ENCODE measurements at regions of chr6 and their contacts with region 1.

Region 1: GRCh38 chr6:2952557-2953095 is 18.7 kb downstream of the SERPINB6 start:
- DNase-seq: peak; percentile 91
- ATAC-seq: peak; percentile 96
- H3K4me3 ChIP-seq: no peak overlapping the region
- H3K27ac ChIP-seq: peak overlapping the region; percentile 12; the same call in 1 of the 2 replicates
- H3K4me1 ChIP-seq: peaks cover 10 to 18% of the 10 kb centered on the region in 2 experiments
- H3K27me3 ChIP-seq: no peaks in the 10 kb centered on the region
- CTCF ChIP-seq: peak; percentile 99 to 100 (median 99)
- POLR2A ChIP-seq: no peak
- RAD21 ChIP-seq: peak; percentile 83

Region 2: DNA sequence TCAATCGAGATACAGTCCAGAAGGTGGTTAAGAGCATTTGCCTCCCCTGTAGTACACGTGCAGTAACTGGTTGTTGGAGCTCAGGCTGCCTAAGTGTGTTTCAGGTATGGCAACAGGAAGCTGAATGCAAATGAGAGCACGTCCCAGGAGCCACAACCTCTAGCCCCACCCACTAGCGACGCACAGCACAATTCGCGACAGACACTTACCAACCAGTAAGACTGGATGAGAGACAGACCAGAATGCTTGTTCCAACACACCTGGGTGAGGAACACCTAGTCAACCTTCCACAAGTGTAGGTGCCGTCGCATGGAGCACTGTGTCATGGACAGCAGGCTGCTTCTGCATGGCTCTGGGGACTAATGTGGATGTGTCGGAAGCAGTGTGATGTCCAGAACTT is 103.8 kb before region 1 on chr6:
- CTCF ChIA-PET with region 1: interaction called, 17 read pairs
- POLR2A ChIA-PET with region 1: no interaction called
- RAD21 ChIA-PET with region 1: interaction called, 3 to 4 read pairs
- intact Hi-C with region 1: no loop called
- DNase-seq: no peak
- ATAC-seq: peak; percentile 43
- H3K4me3 ChIP-seq: no peak overlapping the region
- H3K27ac ChIP-seq: no peak overlapping the region; the same call in 1 of the 2 replicates
- H3K4me1 ChIP-seq: peaks cover 26 to 76% of the 10 kb centered on the region in 2 experiments
- H3K27me3 ChIP-seq: no peaks in the 10 kb centered on the region
- CTCF ChIP-seq: no peak
- POLR2A ChIP-seq: no peak
- RAD21 ChIP-seq: no peak

Region 3: GRCh38 chr6:2940010-2940850 is 12.4 kb before region 1 on chr6:
- CTCF ChIA-PET with region 1: interaction called, 28 read pairs
- POLR2A ChIA-PET with region 1: no interaction called
- RAD21 ChIA-PET with region 1: no interaction called
- intact Hi-C with region 1: no loop called
- DNase-seq: no peak
- ATAC-seq: no peak
- H3K4me3 ChIP-seq: no peak overlapping the region
- H3K27ac ChIP-seq: no peak overlapping the region
- H3K4me1 ChIP-seq: peaks cover 0 to 7% of the 10 kb centered on the region in 2 experiments; a peak in 1 of 4 replicates
- H3K27me3 ChIP-seq: no peaks in the 10 kb centered on the region
- CTCF ChIP-seq: no peak
- POLR2A ChIP-seq: peak; percentile 18
- RAD21 ChIP-seq: no peak

Region 4: GRCh38 chr6:2971420-2972218 is 19.0 kb after region 1 on chr6 and contains the start of gene SERPINB6:
- CTCF ChIA-PET with region 1: interaction called, 14 read pairs
- POLR2A ChIA-PET with region 1: interaction called, 4 read pairs
- RAD21 ChIA-PET with region 1: no interaction called
- intact Hi-C with region 1: loop called (anchors 1 kb)
- DNase-seq: no peak
- ATAC-seq: peak; percentile 66
- H3K4me3 ChIP-seq: peak within 1 kb of the TSS; percentile 53 to 70
- H3K27ac ChIP-seq: peak within 1 kb of the TSS; percentile 92
- H3K4me1 ChIP-seq: peaks cover 14 to 34% of the 10 kb centered on the region in 2 experiments
- H3K27me3 ChIP-seq: no peaks in the 10 kb centered on the region
- CTCF ChIP-seq: no peak
- POLR2A ChIP-seq: no peak
- RAD21 ChIP-seq: no peak
- total RNA-seq, gene SERPINB6: 103 TPM

Region 5: GRCh38 chr6:2976571-2977085 is 24.0 kb after region 1 on chr6:
- CTCF ChIA-PET with region 1: interaction called, 14 read pairs
- POLR2A ChIA-PET with region 1: interaction called, 4 read pairs
- RAD21 ChIA-PET with region 1: no interaction called
- intact Hi-C with region 1: loop called (anchors 1 kb)
- DNase-seq: no peak
- ATAC-seq: peak; percentile 48
- H3K4me3 ChIP-seq: peak overlapping the region in 1 of 2 experiments; percentile 22; a peak in 2 of 4 replicates
- H3K27ac ChIP-seq: peak overlapping the region; percentile 37; the same call in 1 of the 2 replicates
- H3K4me1 ChIP-seq: peaks cover 33 to 67% of the 10 kb centered on the region in 2 experiments
- H3K27me3 ChIP-seq: no peaks in the 10 kb centered on the region
- CTCF ChIP-seq: no peak
- POLR2A ChIP-seq: no peak
- RAD21 ChIP-seq: no peak

Region 6: DNA sequence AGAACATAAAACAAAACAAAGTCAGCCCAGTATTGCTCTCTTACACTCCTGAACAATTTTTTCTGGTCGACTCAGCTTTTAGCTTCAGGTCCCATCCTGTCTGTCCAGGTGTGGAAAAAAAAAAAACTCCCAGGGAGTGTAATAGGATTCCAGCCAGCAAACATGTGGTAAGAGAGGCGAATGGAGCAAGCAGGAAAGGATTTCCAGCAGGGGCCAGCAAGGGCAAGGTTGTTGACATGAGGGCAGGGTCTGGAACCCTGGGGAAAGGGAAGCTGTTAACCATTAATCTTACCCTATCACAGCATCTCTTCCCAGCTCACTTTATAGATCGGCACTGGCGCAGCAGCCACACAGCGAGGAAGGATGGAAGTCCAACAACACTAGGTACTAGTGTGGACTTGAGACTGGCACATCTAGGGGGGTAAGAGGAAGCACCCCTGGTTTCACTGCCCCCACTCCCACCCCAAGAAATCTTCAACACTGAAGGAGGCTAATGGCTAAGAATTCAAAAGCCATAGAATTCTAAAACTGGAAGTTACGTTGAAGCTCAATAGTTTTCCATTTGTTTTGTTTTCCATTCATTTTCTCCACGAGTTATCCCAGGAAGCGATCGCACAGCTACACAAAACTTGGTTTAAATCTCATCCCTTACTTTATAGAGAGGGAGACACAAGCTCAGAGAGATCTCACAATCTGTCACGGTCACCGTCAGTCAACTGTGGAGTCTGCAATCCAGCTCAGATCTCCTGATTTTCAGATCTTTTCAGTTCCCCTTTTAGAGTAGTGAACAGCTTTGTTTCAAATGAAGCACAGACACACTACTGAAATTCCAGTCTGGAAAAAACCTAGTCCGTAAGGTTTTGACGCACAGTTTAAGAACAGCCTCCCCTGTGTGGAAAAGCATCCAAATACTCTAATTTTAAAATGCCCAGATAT is 450.9 kb after region 1 on chr6:
- CTCF ChIA-PET with region 1: no interaction called
- POLR2A ChIA-PET with region 1: no interaction called
- RAD21 ChIA-PET with region 1: no interaction called
- intact Hi-C with region 1: no loop called
- DNase-seq: no peak
- ATAC-seq: no peak
- H3K4me3 ChIP-seq: no peak overlapping the region
- H3K27ac ChIP-seq: no peak overlapping the region
- H3K4me1 ChIP-seq: peaks cover 5 to 6% of the 10 kb centered on the region in 2 experiments; a peak in 1 of 4 replicates
- H3K27me3 ChIP-seq: no peaks in the 10 kb centered on the region
- CTCF ChIP-seq: no peak
- POLR2A ChIP-seq: no peak
- RAD21 ChIP-seq: no peak

Measured in HCT116 (cell line).